Endothelial cell of umbilical vein (primary cell): ENCODE measurements at regions of chr15 and their contacts with region 1.

Region 1: GRCh38 chr15:91271565-91272153 is 171.6 kb downstream of the SV2B start:
- DNase-seq: peak; percentile 66
- H3K4me3 ChIP-seq: no peak overlapping the region
- H3K27ac ChIP-seq: no peak overlapping the region
- H3K4me1 ChIP-seq: no peaks in the 10 kb centered on the region
- H3K27me3 ChIP-seq: no peaks in the 10 kb centered on the region
- CTCF ChIP-seq: peak; percentile 70 to 74
- POLR2A ChIP-seq: no peak

Region 2: GRCh38 chr15:90954712-90955671 is 316.7 kb before region 1 on chr15 and contains the start of gene RCCD1:
- CTCF ChIA-PET with region 1: interaction called, 155 read pairs
- POLR2A ChIA-PET with region 1: no interaction called
- dilution Hi-C with region 1: no loop called
- intact Hi-C with region 1: no loop called
- DNase-seq: peak; percentile 92
- H3K4me3 ChIP-seq: peak within 1 kb of the TSS; percentile 32 to 67 (median 63)
- H3K27ac ChIP-seq: peak within 1 kb of the TSS; percentile 96
- H3K4me1 ChIP-seq: peaks cover 13% of the 10 kb centered on the region
- H3K27me3 ChIP-seq: no peaks in the 10 kb centered on the region
- CTCF ChIP-seq: no peak
- POLR2A ChIP-seq: peak; percentile 89
- total RNA-seq, gene RCCD1: 13.3 and 15.3 TPM in 2 replicates

Region 3: GRCh38 chr15:91049378-91050127 is 222.1 kb before region 1 on chr15:
- CTCF ChIA-PET with region 1: interaction called, 210 read pairs
- POLR2A ChIA-PET with region 1: no interaction called
- dilution Hi-C with region 1: no loop called
- intact Hi-C with region 1: no loop called
- DNase-seq: peak; percentile 66
- H3K4me3 ChIP-seq: no peak overlapping the region
- H3K27ac ChIP-seq: no peak overlapping the region
- H3K4me1 ChIP-seq: no peaks in the 10 kb centered on the region
- H3K27me3 ChIP-seq: peaks cover 9 to 11% of the 10 kb centered on the region in 2 experiments
- CTCF ChIP-seq: peak; percentile 26 to 62
- POLR2A ChIP-seq: no peak

Region 4: DNA sequence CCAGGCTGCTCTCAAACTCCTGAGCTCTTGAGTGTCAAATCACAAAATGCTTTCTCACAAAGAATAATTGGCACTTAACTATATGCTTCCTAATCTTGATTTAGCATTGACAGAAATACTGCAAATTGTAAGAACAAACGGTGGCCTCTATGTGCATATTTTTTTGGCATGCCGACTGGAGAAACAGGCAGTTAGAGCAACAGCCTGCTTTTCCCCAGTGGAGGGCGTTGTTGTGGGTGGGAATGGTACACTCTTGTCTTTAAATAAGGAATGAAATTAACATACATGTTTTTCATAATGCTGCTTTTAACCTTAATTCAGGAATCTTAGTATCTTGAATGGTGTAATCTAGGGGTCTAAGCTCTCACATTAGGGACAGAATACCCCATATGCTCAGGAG is 202.7 kb before region 1 on chr15:
- CTCF ChIA-PET with region 1: interaction called, 10 read pairs
- POLR2A ChIA-PET with region 1: no interaction called
- dilution Hi-C with region 1: no loop called
- intact Hi-C with region 1: no loop called
- DNase-seq: no peak
- H3K4me3 ChIP-seq: no peak overlapping the region
- H3K27ac ChIP-seq: no peak overlapping the region
- H3K4me1 ChIP-seq: no peaks in the 10 kb centered on the region
- H3K27me3 ChIP-seq: no peaks in the 10 kb centered on the region
- CTCF ChIP-seq: no peak
- POLR2A ChIP-seq: no peak

Region 5: GRCh38 chr15:91224755-91225380 is 46.8 kb before region 1 on chr15:
- CTCF ChIA-PET with region 1: interaction called, 10 read pairs
- POLR2A ChIA-PET with region 1: no interaction called
- dilution Hi-C with region 1: no loop called
- intact Hi-C with region 1: loop called (anchors 2 kb)
- DNase-seq: peak; percentile 54
- H3K4me3 ChIP-seq: no peak overlapping the region
- H3K27ac ChIP-seq: no peak overlapping the region
- H3K4me1 ChIP-seq: no peaks in the 10 kb centered on the region
- H3K27me3 ChIP-seq: no peaks in the 10 kb centered on the region
- CTCF ChIP-seq: peak; percentile 58 to 59
- POLR2A ChIP-seq: no peak

Region 6: DNA sequence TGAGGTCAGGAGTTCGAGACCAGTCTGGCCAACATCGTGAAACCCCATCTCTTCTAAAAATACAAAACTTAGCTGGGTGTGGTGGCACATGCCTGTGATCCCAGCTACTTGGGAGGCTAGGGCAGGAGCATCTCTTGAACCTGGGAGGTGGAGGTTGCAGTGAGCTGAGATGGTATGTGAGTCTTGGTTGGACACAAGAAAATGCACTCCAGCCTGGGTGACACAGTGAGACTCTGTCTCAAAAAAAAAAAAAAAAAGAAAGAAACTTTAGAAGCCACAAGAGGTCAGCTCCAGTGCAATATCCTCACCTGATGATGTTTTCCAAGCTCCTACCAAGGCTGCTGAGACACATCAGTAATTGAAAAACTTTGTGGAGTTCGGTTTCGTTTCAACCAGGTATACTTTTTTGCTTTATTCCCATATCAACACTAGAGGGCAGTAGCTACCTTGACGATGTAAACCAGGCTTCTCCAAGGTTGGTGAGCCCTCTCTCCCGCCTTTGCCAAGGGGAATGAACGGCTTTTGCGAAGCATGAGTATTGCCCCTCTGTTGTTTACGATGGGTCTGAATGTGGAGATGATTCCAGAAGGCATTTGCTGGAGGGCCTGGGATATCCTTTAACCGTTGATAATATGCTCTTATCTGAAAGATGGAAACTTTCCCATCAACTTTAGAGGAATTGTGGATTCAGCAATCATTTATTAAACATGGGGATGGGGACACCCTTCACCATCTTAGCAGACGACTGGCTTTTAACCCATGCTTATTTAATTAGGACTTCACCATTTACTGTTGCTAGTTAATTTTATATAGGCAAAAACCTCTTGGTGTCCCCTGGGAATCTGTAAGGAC is 31.2 kb after region 1 on chr15:
- CTCF ChIA-PET with region 1: interaction called, 12 read pairs
- POLR2A ChIA-PET with region 1: no interaction called
- dilution Hi-C with region 1: no loop called
- intact Hi-C with region 1: no loop called
- DNase-seq: peak; percentile 46
- H3K4me3 ChIP-seq: no peak overlapping the region
- H3K27ac ChIP-seq: no peak overlapping the region
- H3K4me1 ChIP-seq: no peaks in the 10 kb centered on the region
- H3K27me3 ChIP-seq: peaks cover 2 to 3% of the 10 kb centered on the region in 2 experiments
- CTCF ChIP-seq: peak; percentile 53 to 65
- POLR2A ChIP-seq: no peak

Region 7: DNA sequence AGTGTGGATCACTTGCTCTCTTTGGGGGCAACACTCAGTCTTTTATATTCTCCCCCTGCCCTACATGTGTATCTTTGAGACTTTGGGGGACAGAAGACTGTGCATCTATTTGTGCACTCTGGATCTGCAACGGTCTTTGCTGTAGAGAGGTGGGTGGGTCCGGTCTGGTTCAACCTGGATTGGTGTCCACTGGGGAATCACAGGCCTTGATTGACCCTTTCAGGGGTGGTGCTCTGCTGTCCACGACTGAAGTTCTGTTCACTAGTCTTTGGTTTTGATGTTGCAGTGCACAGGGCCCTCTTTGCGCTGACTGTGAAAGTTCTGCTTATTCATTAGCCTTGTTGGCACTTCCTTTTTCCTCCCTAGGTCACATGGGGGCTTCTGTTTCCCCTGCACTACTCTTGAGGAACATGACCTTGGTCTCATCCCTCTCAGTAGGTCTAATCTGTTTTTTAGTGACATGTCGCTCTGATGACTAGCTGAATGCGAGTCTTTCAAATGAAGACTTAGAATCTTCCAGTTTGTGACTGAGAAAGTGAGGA is 112.6 kb after region 1 on chr15:
- CTCF ChIA-PET with region 1: no interaction called
- POLR2A ChIA-PET with region 1: no interaction called
- dilution Hi-C with region 1: no loop called
- intact Hi-C with region 1: no loop called
- DNase-seq: no peak
- H3K4me3 ChIP-seq: no peak overlapping the region
- H3K27ac ChIP-seq: no peak overlapping the region
- H3K4me1 ChIP-seq: no peaks in the 10 kb centered on the region
- H3K27me3 ChIP-seq: no peaks in the 10 kb centered on the region
- CTCF ChIP-seq: no peak
- POLR2A ChIP-seq: no peak